ENCODE measurements at regions of chr1 and their contacts with region 1.

Region 1: GRCh38 chr1:8671306-8671917 is 146.0 kb downstream of the RERE start:
- DNase-seq: peak; percentile 76
- H3K4me3 Mint-ChIP-seq: no peak overlapping the region
- H3K27ac Mint-ChIP-seq: peak overlapping the region; percentile 80
- H3K4me1 Mint-ChIP-seq: peaks cover 44% of the 10 kb centered on the region
- H3K27me3 Mint-ChIP-seq: no peaks in the 10 kb centered on the region
- CTCF ChIP-seq: peak; percentile 81

Region 2: GRCh38 chr1:8560611-8561544 is 110.5 kb before region 1 on chr1:
- CTCF ChIA-PET with region 1: interaction called, 61 read pairs
- POLR2A ChIA-PET with region 1: interaction called, 9 read pairs
- intact Hi-C with region 1: loop called (anchors 1 kb)
- DNase-seq: peak; percentile 69
- H3K4me3 Mint-ChIP-seq: no peak overlapping the region
- H3K27ac Mint-ChIP-seq: no peak overlapping the region
- H3K4me1 Mint-ChIP-seq: peaks cover 6% of the 10 kb centered on the region
- H3K27me3 Mint-ChIP-seq: no peaks in the 10 kb centered on the region
- CTCF ChIP-seq: peak; percentile 84

Region 3: DNA sequence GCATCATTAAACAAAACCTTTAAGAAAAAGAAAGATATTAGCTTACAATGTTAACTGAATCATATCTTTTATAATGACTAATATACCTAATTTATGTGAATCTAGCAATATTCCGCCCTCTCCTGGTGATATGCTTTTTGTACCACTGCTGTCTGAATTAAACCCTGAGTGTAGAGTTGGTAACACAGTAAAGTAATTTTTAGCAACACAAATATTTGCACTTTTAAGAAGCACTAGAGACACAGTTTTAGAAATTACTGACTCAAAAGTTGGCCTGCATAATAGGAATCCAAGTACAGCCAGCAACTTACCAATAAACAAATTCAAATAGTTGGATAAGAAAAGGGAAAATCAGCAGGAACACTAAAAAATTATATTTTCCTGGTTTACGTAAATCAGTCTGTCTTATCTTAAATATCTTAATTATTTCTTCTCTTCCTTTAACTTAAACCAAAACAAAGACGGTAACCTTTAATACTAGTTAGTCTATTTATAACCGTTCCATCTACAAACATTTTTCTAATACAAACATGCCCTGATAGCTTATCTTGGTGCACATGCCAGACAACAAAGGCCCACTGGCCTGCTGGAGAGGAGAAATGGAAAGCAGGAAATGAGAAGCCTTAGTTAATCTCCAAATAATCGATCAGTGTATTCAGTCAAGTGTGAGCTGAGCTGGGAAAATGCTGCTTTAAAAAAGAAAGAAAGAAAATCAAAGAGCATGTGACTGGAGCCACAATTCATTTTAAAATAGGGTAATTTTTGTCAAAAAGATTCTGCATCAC is 100.0 kb before region 1 on chr1:
- CTCF ChIA-PET with region 1: interaction called, 16 read pairs
- POLR2A ChIA-PET with region 1: interaction called, 3 read pairs
- intact Hi-C with region 1: no loop called
- DNase-seq: peak; percentile 33
- H3K4me3 Mint-ChIP-seq: no peak overlapping the region
- H3K27ac Mint-ChIP-seq: no peak overlapping the region
- H3K4me1 Mint-ChIP-seq: peaks cover 11% of the 10 kb centered on the region
- H3K27me3 Mint-ChIP-seq: no peaks in the 10 kb centered on the region
- CTCF ChIP-seq: peak; percentile 52

Region 4: GRCh38 chr1:8660411-8660828 is 11.0 kb before region 1 on chr1:
- CTCF ChIA-PET with region 1: interaction called, 39 read pairs
- POLR2A ChIA-PET with region 1: interaction called, 52 read pairs
- intact Hi-C with region 1: no loop called
- DNase-seq: peak; percentile 77
- H3K4me3 Mint-ChIP-seq: no peak overlapping the region
- H3K27ac Mint-ChIP-seq: no peak overlapping the region
- H3K4me1 Mint-ChIP-seq: no peaks in the 10 kb centered on the region
- H3K27me3 Mint-ChIP-seq: no peaks in the 10 kb centered on the region
- CTCF ChIP-seq: no peak

Region 5: DNA sequence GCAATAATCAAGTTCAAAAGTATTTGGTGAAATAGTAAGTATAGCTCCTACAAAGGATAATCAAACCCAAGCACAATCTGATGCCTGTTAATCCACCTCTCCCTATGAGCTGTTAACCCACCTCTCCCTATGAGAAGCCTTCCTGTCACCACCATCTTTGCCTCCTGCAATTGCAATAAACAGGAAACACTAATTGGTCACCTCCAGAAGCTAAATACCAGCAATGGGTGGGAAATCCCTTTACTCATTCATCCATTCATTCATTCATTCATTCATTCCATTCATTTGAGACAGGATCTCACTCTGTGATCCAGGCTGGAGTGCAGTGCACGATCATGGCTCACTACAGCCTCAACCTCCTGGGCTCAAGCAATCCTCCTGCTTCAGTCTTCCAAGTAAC is 13.2 kb after region 1 on chr1:
- CTCF ChIA-PET with region 1: interaction called, 7 read pairs
- POLR2A ChIA-PET with region 1: interaction called, 39 read pairs
- intact Hi-C with region 1: no loop called
- DNase-seq: no peak
- H3K4me3 Mint-ChIP-seq: no peak overlapping the region
- H3K27ac Mint-ChIP-seq: no peak overlapping the region
- H3K4me1 Mint-ChIP-seq: peaks cover 19% of the 10 kb centered on the region
- H3K27me3 Mint-ChIP-seq: no peaks in the 10 kb centered on the region
- CTCF ChIP-seq: no peak